Pancreas (tissue), 10 donors: ENCODE measurements at regions of chr1 and their contacts with region 1.

Region 1: DNA sequence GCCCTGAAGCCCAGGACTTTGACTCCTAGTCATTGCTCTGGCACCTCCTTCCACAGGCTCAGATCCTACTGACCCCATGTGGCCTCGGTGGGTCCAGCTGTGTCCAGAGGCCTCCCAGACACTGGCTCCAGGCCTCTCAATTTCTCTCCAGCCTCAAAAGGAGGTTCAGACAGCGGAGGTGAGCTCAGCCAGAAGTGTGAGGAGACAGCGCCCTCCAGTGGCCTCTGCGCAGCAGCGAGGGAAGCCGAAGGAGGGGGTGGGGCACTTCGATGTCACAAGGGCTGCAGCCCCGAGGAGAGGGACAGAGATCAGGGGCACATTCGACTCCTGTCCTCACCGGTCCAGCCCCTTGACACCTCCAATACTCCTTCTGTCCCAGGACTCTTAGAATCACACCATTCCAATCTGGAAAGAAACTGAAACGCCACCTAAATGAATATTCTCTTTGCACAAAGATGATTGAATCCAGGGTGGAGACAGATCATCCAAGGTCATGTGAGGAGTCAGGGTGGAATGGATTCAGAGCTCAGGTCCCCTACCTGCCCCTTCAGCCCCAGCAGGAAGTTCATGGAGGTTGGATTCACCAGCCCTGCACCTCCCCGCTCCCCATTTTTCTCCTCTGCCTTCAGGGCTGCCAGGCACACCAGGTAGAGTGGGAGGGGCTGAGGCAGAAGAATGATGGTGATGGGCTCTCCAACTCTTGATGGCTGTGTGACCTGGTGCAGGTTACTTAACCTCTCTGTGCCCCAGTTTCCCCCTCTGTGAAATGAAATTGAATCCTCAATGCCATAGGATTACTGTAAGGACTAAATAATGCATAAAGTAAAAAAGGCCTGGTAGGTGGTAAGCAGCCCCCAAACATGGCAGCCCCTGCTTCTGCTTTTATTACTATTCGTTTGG is 34.8 kb upstream of the ZBTB40 start:
- DNase-seq: peak; percentile 72 to 93 (median 87)
- ATAC-seq: peak; percentile 47 to 66 (median 60)
- H3K4me3 ChIP-seq: no peak overlapping the region
- H3K27ac ChIP-seq: no peak overlapping the region
- H3K4me1 ChIP-seq: peaks cover 13 to 25% (median 22%) of the 10 kb centered on the region in 3 donors
- H3K27me3 ChIP-seq: no peaks in the 10 kb centered on the region
- CTCF ChIP-seq: peak; percentile 84 to 96 (median 92)

Region 2: DNA sequence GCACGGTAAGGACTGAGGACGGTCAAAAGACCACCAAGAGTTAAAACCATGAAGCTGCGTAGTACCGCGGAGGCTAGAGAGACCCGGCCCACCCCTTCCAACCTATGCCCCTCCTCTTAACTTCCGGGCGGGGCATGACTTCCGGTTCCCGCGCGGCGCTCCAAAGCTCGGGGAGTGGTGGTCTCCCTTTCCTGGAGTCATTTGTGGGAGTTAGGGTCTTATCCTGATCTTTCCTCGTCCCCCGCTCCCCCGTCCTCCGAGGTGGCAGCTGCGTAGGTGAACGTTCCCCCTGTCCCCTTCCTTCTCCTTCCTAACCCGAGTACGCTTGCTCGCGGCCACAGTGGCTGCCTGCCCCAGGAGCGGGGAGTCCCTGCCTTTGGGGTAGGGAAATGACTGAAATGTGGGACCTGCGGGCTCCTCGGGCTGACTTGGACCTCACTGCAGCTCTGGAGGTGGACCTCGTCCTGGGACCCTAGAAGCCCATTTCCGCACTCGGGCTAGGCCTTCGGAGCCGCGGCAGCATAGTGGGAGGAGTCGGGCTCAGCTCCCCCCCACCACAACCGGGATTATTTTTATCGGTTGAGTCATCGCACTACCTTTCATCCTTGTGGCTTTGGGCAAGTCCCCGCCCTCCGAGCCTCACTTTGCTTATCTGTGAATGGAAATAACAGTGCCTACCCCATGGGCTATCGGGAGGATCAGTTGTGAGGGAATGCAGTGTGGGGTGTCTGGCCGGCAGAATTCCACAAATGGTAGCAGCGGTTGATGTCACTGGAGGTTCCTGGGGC is 391.2 kb before region 1 on chr1:
- intact Hi-C with region 1: loop called in 1 of 3 experiments (anchors 5 kb)
- DNase-seq: peak; percentile 54 to 81 (median 68)
- ATAC-seq: peak; percentile 73 to 95 (median 80)
- H3K4me3 ChIP-seq: peak overlapping the region; percentile 34 to 61 (median 36)
- H3K27ac ChIP-seq: peak overlapping the region; percentile 81 to 97 (median 90)
- H3K4me1 ChIP-seq: no peaks in the 10 kb centered on the region
- H3K27me3 ChIP-seq: no peaks in the 10 kb centered on the region
- CTCF ChIP-seq: no peak

Region 3: DNA sequence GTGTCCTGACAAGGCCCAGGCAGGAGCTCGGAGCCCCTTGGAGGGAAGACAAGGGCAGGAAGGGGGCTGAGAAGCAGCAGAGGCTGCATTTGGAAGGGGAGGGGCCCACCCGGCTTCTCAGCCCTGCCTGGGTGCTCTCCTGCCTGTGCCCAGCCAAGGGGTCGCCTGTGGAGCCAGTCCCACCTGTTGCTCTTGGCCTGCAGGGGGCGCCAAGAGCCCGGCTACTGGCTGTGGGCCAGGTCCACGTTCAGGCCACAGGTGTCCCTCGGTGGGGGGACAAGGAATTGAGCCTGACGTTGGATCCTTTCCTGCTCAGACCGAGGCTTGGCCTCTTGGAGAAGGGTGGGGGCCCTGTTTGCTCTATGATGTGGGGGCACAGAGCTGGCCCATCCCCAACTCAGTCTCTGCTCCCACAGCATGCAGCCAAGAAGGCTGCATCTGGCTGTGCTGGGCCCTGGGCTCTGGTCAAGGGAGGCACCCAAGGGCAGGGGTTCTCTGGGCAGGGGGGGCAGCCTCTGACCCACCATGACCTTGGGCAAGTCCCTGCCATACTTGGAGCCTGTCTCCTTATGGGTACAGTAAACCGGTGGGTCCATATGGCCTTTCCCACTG is 284.8 kb before region 1 on chr1:
- intact Hi-C with region 1: loop called in 1 of 3 experiments (anchors 10 kb)
- DNase-seq: peak in 5 of 6 donors; percentile 37 to 89 (median 71)
- ATAC-seq: peak; percentile 72 to 85 (median 76)
- H3K4me3 ChIP-seq: no peak overlapping the region
- H3K27ac ChIP-seq: no peak overlapping the region
- H3K4me1 ChIP-seq: no peaks in the 10 kb centered on the region
- H3K27me3 ChIP-seq: no peaks in the 10 kb centered on the region
- CTCF ChIP-seq: peak; percentile 75 to 82 (median 78)